ENCODE measurements at regions of chr3 and their contacts with region 1.

Region 1: GRCh38 chr3:33372218-33373081 is 67.8 kb downstream of the UBP1 start:
- DNase-seq: peak; percentile 55
- H3K4me3 ChIP-seq: no peak overlapping the region; a peak in 1 of 4 replicates
- H3K27ac ChIP-seq: no peak overlapping the region
- H3K4me1 ChIP-seq: peaks cover 0 to 3% of the 10 kb centered on the region in 2 experiments; a peak in 1 of 4 replicates
- H3K27me3 ChIP-seq: no peaks in the 10 kb centered on the region
- CTCF ChIP-seq: peak; percentile 99
- EP300 ChIP-seq: no peak
- RAD21 ChIP-seq: peak; percentile 84

Region 2: GRCh38 chr3:33096093-33096868 is 276.2 kb before region 1 on chr3:
- CTCF ChIA-PET with region 1: interaction called, 10 read pairs
- POLR2A ChIA-PET with region 1: no interaction called
- DNase-seq: peak; percentile 67
- H3K4me3 ChIP-seq: peak overlapping the region; percentile 77 to 80
- H3K27ac ChIP-seq: peak overlapping the region; percentile 69 to 75
- H3K4me1 ChIP-seq: peaks cover 0 to 8% of the 10 kb centered on the region in 2 experiments; a peak in 1 of 4 replicates
- H3K27me3 ChIP-seq: no peaks in the 10 kb centered on the region
- CTCF ChIP-seq: no peak
- EP300 ChIP-seq: no peak
- RAD21 ChIP-seq: no peak

Region 3: GRCh38 chr3:33131331-33132018 is 241.0 kb before region 1 on chr3:
- CTCF ChIA-PET with region 1: interaction called, 221 read pairs
- POLR2A ChIA-PET with region 1: interaction called, 7 read pairs
- DNase-seq: peak; percentile 71
- H3K4me3 ChIP-seq: no peak overlapping the region; a peak in 1 of 4 replicates
- H3K27ac ChIP-seq: no peak overlapping the region
- H3K4me1 ChIP-seq: peaks cover 0 to 3% of the 10 kb centered on the region in 2 experiments; a peak in 2 of 4 replicates
- H3K27me3 ChIP-seq: no peaks in the 10 kb centered on the region
- CTCF ChIP-seq: peak; percentile 81
- EP300 ChIP-seq: no peak
- RAD21 ChIP-seq: peak; percentile 87

Region 4: GRCh38 chr3:33277193-33277882 is 95.1 kb before region 1 on chr3 and contains the start of gene FBXL2:
- CTCF ChIA-PET with region 1: interaction called, 17 read pairs
- POLR2A ChIA-PET with region 1: no interaction called
- DNase-seq: peak; percentile 98
- H3K4me3 ChIP-seq: peak within 1 kb of the TSS; percentile 74 to 81
- H3K27ac ChIP-seq: peak within 1 kb of the TSS; percentile 40 to 49; a peak in 3 of 4 replicates
- H3K4me1 ChIP-seq: peaks cover 0 to 7% of the 10 kb centered on the region in 2 experiments; a peak in 2 of 4 replicates
- H3K27me3 ChIP-seq: no peaks in the 10 kb centered on the region
- CTCF ChIP-seq: no peak
- EP300 ChIP-seq: no peak
- RAD21 ChIP-seq: no peak
- polyA plus RNA-seq, gene FBXL2: 13.7 and 21.2 TPM in 2 replicates

Region 5: DNA sequence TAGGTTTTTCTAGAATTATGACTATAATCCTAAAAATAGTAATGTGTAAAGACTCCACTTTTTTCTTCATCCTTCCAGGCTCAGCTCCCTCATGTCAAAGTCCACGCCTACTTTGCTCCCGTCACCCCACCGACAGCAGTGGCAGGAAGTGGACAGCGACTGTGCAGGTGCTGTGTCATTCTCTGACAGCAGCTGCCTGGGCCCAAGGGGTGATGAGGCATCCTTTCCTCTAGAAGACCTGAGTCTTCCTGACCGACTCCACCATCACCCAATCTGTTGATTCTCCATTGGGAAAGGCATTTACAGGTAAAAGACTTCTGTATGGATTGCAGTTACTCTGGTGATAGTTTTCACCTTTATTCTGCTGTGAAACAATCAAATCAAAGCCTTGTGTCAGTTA is 13.0 kb after region 1 on chr3:
- CTCF ChIA-PET with region 1: interaction called, 48 read pairs
- POLR2A ChIA-PET with region 1: no interaction called
- DNase-seq: no peak
- H3K4me3 ChIP-seq: no peak overlapping the region
- H3K27ac ChIP-seq: no peak overlapping the region
- H3K4me1 ChIP-seq: peaks cover 3 to 19% of the 10 kb centered on the region in 2 experiments; a peak in 3 of 4 replicates
- H3K27me3 ChIP-seq: no peaks in the 10 kb centered on the region
- CTCF ChIP-seq: no peak
- EP300 ChIP-seq: no peak
- RAD21 ChIP-seq: no peak

Region 6: GRCh38 chr3:33401781-33402180 is 29.3 kb after region 1 on chr3:
- CTCF ChIA-PET with region 1: interaction called, 27 read pairs
- POLR2A ChIA-PET with region 1: no interaction called
- DNase-seq: no peak
- H3K4me3 ChIP-seq: no peak overlapping the region
- H3K27ac ChIP-seq: peak overlapping the region in 1 of 2 experiments; percentile 53; a peak in 2 of 4 replicates
- H3K4me1 ChIP-seq: peaks cover 0 to 12% of the 10 kb centered on the region in 2 experiments; a peak in 1 of 4 replicates
- H3K27me3 ChIP-seq: no peaks in the 10 kb centered on the region
- CTCF ChIP-seq: no peak
- EP300 ChIP-seq: no peak
- RAD21 ChIP-seq: no peak

Region 7: GRCh38 chr3:33787328-33788009 is 415.0 kb after region 1 on chr3:
- CTCF ChIA-PET with region 1: interaction called, 15 read pairs
- POLR2A ChIA-PET with region 1: no interaction called
- DNase-seq: peak; percentile 64
- H3K4me3 ChIP-seq: peak overlapping the region; percentile 39 to 55
- H3K27ac ChIP-seq: no peak overlapping the region
- H3K4me1 ChIP-seq: peaks cover 4 to 6% of the 10 kb centered on the region in 2 experiments; a peak in 2 of 4 replicates
- H3K27me3 ChIP-seq: no peaks in the 10 kb centered on the region
- CTCF ChIP-seq: peak; percentile 90
- EP300 ChIP-seq: no peak
- RAD21 ChIP-seq: peak; percentile 86

Measured in SK-N-SH (cell line).